Panc1 (cell line): ENCODE measurements at regions of chr15 and their contacts with region 1.

Region 1: DNA sequence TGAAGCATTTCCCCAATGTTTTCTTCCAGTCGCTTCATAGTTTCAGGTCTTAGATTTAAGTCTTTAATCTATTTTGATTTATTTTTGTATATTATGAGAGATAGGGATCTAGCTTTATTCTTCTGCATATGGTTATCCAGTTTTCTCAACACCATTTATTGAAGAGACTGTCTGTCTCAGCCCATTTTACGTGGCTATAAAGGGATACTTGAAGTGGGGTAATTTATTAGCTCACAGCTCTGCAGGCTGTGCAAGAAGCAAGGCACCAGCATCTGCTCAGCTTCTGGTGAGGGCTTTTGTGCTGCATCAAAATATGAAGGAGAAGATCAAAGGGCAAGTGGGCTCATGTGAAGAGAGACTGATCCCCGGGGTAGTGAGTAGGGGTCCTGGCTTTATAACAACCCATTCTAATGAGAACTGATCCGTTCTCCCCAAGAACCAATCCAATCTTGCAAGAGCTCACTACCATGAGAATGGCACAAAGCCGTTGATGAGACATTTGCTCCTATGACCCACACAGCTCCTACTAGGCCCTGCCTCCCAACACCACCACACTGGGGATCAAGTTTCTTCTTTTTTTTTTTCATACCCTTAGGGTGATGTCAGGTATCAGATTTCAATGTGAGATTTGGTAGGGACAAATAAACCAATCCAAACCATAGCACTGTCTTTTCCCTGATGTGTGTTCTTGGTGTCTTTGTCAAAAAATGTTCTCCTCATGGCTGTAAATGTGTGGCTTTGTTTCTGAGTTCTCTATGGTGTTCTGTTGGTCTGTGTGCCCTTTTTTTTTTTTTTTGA is 63.2 kb downstream of the IQGAP1 start:
- DNase-seq: no peak
- ATAC-seq: no peak
- H3K4me3 ChIP-seq: no peak overlapping the region
- H3K27ac ChIP-seq: no peak overlapping the region
- H3K4me1 ChIP-seq: no peaks in the 10 kb centered on the region
- H3K27me3 ChIP-seq: no peaks in the 10 kb centered on the region
- CTCF ChIP-seq: no peak

Region 2: DNA sequence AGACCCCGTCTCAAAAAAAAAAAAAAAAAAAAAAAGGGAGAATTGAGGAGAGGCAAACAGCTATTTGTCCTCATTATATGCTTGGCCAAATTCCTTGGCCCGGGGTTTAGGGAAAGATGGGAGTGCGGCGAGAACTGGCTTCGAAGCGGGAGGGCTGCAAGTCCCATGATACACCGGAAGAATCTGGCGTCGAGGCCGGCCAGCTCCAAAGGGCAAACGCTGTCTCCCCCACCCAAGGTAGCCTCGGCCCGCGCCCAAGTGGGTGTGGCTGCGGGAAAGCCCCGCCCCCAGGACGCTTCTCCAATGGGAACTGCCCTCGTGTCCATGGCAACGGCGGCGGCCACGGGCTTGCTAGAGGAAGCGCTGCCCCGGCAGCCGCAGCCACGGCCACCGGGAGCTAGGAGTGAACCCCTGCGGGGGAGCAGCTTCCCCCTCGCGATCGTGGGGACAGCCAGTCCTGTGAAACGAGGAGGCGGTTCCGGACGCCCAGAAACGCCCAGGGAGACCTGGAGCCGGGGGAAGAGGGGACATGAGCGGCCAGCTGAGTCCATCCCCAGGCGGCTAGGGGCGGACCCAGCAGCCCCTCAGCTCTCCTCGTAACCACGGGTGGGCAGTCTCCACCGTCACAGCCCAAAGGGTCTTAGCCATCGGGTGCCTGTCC is 201.9 kb before region 1 on chr15 and contains the start of gene TTLL13:
- CTCF ChIA-PET with region 1: no interaction called
- POLR2A ChIA-PET with region 1: no interaction called
- in situ Hi-C with region 1: no loop called
- intact Hi-C with region 1: no loop called
- DNase-seq: no peak
- ATAC-seq: peak; percentile 96
- H3K4me3 ChIP-seq: peak within 1 kb of the TSS; percentile 59 to 83
- H3K27ac ChIP-seq: peak within 1 kb of the TSS; percentile 68
- H3K4me1 ChIP-seq: peaks cover 10% of the 10 kb centered on the region
- H3K27me3 ChIP-seq: no peaks in the 10 kb centered on the region
- CTCF ChIP-seq: no peak
- total RNA-seq, gene TTLL13: 0.39 TPM

Region 3: DNA sequence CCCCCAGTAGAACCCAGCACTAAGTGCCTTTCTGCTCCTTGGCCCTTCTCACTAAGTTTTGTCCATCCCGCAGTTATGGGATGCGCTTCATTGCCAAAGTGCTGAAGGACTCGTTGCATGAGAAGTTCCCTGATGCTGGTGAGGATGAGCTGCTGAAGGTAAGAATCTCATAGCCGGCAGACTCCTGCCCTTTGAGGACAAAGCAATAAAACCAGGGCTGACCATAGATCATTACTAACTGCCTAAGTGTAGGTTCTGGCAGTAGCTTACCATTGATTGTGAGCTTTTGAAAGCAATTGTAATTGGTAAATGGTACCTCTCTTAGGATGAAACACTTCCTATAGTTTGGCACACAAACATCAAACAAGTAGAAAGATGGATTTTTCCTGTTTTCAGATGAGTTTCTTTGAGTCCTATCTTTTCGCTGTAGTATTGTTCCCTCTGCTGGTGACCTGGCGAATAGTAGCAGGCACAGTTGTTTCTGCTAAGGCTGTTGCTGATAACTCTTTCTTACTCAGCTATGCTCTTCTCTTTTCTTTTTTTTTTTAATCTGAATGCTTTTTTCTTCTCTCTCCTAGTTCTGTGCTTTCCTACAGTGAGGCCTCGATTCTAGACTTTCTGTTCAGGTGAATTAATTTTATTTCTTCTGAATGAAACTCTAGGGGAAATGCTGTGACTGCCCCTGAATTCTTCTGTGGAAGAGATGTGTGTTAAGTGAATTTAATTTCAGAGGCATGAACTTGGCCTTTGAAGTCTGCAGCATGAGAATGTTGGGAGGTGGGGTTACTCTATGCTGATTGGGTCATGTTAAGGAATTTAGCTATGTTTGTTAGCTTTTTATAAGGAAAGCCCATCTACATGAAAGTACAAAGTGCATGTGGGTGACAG is 31.1 kb after region 1 on chr15:
- CTCF ChIA-PET with region 1: no interaction called
- POLR2A ChIA-PET with region 1: no interaction called
- in situ Hi-C with region 1: no loop called
- intact Hi-C with region 1: loop called (anchors 1 kb)
- DNase-seq: peak; percentile 18
- ATAC-seq: peak; percentile 62; the same call in 1 of the 2 replicates
- H3K4me3 ChIP-seq: no peak overlapping the region
- H3K27ac ChIP-seq: no peak overlapping the region
- H3K4me1 ChIP-seq: peaks cover 9% of the 10 kb centered on the region; the same call in 1 of the 2 replicates
- H3K27me3 ChIP-seq: no peaks in the 10 kb centered on the region
- CTCF ChIP-seq: peak; percentile 77